ENCODE measurements at regions of chr12 and their contacts with region 1.

Region 1: DNA sequence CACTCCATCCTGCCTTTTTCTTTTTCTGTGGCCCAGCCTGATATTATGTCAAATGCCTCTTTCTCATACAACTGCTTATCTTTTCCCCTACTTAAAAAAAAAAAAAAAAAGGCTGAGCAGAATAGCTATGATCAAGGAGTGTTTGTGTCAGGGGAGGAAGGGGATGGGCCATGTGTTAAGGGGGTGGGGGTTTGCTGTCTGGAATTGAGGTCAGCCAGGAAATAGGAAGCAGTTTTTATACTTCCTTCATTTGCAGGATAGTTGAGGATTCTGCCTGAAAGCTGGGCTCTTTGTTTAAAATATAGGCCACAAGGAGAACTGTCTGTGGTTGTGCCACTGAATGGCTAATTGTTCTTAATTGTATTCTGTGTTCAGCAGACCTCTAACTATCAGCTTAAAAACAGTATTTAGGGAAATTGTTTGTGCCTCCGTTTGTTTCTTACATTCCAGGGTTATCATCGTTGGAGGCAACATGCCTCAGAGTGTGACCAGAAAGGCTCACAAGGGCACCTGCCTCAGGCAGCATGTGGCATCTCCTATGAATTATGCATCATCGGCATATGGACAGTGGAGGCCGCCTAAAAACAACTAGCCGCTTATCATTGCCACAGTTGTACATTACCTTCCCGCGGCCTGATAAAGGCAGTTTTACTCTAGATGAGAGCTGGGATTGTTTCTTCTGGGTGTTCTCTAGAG is 96.0 kb downstream of the SRGAP1 start:
- DNase-seq: no peak
- ATAC-seq: no peak
- H3K4me3 ChIP-seq: no peak overlapping the region
- H3K27ac ChIP-seq: no peak overlapping the region
- H3K4me1 ChIP-seq: peaks cover 44% of the 10 kb centered on the region
- H3K27me3 ChIP-seq: no peaks in the 10 kb centered on the region
- CTCF ChIP-seq: no peak
- EP300 ChIP-seq: no peak
- POLR2A ChIP-seq: no peak
- RAD21 ChIP-seq: no peak

Region 2: GRCh38 chr12:63917864-63918799 is 22.3 kb before region 1 on chr12:
- CTCF ChIA-PET with region 1: no interaction called
- POLR2A ChIA-PET with region 1: interaction called, 13 read pairs
- in situ Hi-C with region 1: no loop called
- intact Hi-C with region 1: loop called (anchors 2 kb)
- DNase-seq: peak; percentile 92
- ATAC-seq: peak; percentile 86
- H3K4me3 ChIP-seq: peak overlapping the region; percentile 46 to 58 (median 57); a peak in 5 of 6 replicates
- H3K27ac ChIP-seq: peak overlapping the region; percentile 70
- H3K4me1 ChIP-seq: peaks cover 59% of the 10 kb centered on the region
- H3K27me3 ChIP-seq: no peaks in the 10 kb centered on the region
- CTCF ChIP-seq: no peak
- EP300 ChIP-seq: peak; percentile 82 to 86
- POLR2A ChIP-seq: no peak
- RAD21 ChIP-seq: no peak

Region 3: GRCh38 chr12:63989301-63989845 is 48.9 kb after region 1 on chr12:
- CTCF ChIA-PET with region 1: no interaction called
- POLR2A ChIA-PET with region 1: no interaction called
- in situ Hi-C with region 1: no loop called
- intact Hi-C with region 1: loop called (anchors 2 kb)
- DNase-seq: peak; percentile 55
- ATAC-seq: peak; percentile 72
- H3K4me3 ChIP-seq: no peak overlapping the region
- H3K27ac ChIP-seq: no peak overlapping the region
- H3K4me1 ChIP-seq: peaks cover 12% of the 10 kb centered on the region
- H3K27me3 ChIP-seq: no peaks in the 10 kb centered on the region
- CTCF ChIP-seq: no peak
- EP300 ChIP-seq: no peak
- POLR2A ChIP-seq: no peak
- RAD21 ChIP-seq: no peak

Region 4: GRCh38 chr12:64039281-64039871 is 98.9 kb after region 1 on chr12:
- CTCF ChIA-PET with region 1: no interaction called
- POLR2A ChIA-PET with region 1: no interaction called
- in situ Hi-C with region 1: no loop called
- intact Hi-C with region 1: no loop called
- DNase-seq: no peak
- ATAC-seq: no peak
- H3K4me3 ChIP-seq: no peak overlapping the region
- H3K27ac ChIP-seq: no peak overlapping the region
- H3K4me1 ChIP-seq: peaks cover 7% of the 10 kb centered on the region; the same call in 1 of the 2 replicates
- H3K27me3 ChIP-seq: no peaks in the 10 kb centered on the region
- CTCF ChIP-seq: no peak
- EP300 ChIP-seq: no peak
- POLR2A ChIP-seq: no peak
- RAD21 ChIP-seq: no peak